ENCODE measurements at regions of chr13 and their contacts with region 1.

Region 1: GRCh38 chr13:100946588-100946987 is 272.0 kb upstream of the TMTC4 start:
- DNase-seq: no peak
- ATAC-seq: no peak
- H3K4me3 Mint-ChIP-seq: no peak overlapping the region
- H3K27ac Mint-ChIP-seq: no peak overlapping the region
- H3K4me1 Mint-ChIP-seq: no peaks in the 10 kb centered on the region
- H3K27me3 Mint-ChIP-seq: no peaks in the 10 kb centered on the region

Region 2: GRCh38 chr13:100514788-100515409 is 431.7 kb before region 1 on chr13:
- CTCF ChIA-PET with region 1: no interaction called
- POLR2A ChIA-PET with region 1: no interaction called
- DNase-seq: peak; percentile 79
- ATAC-seq: peak; percentile 97
- H3K4me3 Mint-ChIP-seq: no peak overlapping the region
- H3K27ac Mint-ChIP-seq: no peak overlapping the region
- H3K4me1 Mint-ChIP-seq: peaks cover 3% of the 10 kb centered on the region
- H3K27me3 Mint-ChIP-seq: no peaks in the 10 kb centered on the region

Region 3: DNA sequence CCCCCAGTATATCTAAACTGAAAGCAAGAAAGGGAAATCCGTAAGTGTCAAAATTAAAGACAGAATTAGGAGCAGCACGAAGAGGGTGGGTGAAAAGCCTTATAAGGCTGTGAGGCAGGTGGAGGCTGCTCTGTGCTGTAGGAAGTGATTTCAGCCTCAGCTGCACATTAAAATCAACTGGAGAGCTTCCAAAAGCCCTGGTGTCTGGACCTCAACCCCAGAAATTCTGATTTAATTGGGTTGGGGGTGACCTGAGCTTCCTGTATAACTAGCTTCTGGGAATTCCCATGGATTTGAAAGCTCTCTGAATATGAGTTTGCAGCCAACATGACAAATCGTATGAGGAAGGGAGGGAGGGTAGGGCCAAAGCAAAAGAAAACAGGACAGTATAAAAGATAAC is 29.6 kb before region 1 on chr13:
- CTCF ChIA-PET with region 1: no interaction called
- POLR2A ChIA-PET with region 1: no interaction called
- DNase-seq: no peak
- ATAC-seq: no peak
- H3K4me3 Mint-ChIP-seq: no peak overlapping the region
- H3K27ac Mint-ChIP-seq: no peak overlapping the region
- H3K4me1 Mint-ChIP-seq: no peaks in the 10 kb centered on the region
- H3K27me3 Mint-ChIP-seq: peaks cover 5% of the 10 kb centered on the region

Region 4: GRCh38 chr13:100933841-100934240 is 12.7 kb before region 1 on chr13:
- CTCF ChIA-PET with region 1: no interaction called
- POLR2A ChIA-PET with region 1: interaction called, 12 read pairs
- DNase-seq: no peak
- ATAC-seq: no peak
- H3K4me3 Mint-ChIP-seq: no peak overlapping the region
- H3K27ac Mint-ChIP-seq: no peak overlapping the region
- H3K4me1 Mint-ChIP-seq: no peaks in the 10 kb centered on the region
- H3K27me3 Mint-ChIP-seq: peaks cover 6% of the 10 kb centered on the region

Region 5: GRCh38 chr13:100957741-100958140 is 11.2 kb after region 1 on chr13:
- CTCF ChIA-PET with region 1: no interaction called
- POLR2A ChIA-PET with region 1: no interaction called
- DNase-seq: no peak
- ATAC-seq: no peak
- H3K4me3 Mint-ChIP-seq: no peak overlapping the region
- H3K27ac Mint-ChIP-seq: no peak overlapping the region
- H3K4me1 Mint-ChIP-seq: no peaks in the 10 kb centered on the region
- H3K27me3 Mint-ChIP-seq: no peaks in the 10 kb centered on the region

Region 6: DNA sequence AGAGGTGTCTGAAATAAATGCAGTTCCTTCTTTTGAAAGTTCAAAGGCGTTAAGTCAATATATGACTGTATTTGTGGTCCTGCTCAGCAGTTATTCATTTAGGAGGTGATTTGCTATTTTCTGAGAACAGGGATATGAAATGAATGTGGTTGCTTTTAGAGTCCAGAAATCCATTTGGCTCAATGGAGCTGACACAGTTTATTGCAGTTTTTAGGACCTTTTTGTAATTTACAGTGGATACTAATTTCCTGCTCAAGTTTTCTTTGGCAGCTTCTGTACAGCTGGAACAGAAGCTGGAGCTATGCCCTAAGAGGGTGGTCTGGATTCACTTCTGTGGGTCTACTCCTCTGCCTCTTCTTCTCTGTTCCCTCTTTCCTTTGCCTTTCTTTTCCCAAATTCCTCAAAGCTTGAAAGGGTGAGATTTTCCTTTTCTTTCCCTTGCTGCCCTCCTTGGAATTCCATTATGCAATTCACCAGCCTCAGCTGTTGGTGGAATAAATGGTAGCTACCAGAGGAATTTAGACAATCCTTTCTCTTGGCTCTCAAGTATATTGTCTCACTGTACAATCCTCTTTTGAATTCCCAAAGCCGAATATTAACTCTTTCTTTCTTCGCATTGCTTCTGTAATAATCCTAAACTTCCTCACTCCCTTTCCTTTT is 545.8 kb after region 1 on chr13:
- CTCF ChIA-PET with region 1: no interaction called
- POLR2A ChIA-PET with region 1: no interaction called
- DNase-seq: no peak
- ATAC-seq: no peak
- H3K4me3 Mint-ChIP-seq: no peak overlapping the region
- H3K27ac Mint-ChIP-seq: no peak overlapping the region
- H3K4me1 Mint-ChIP-seq: no peaks in the 10 kb centered on the region
- H3K27me3 Mint-ChIP-seq: peaks cover 6% of the 10 kb centered on the region

Measured in activated CD8-positive, alpha-beta T cell treated with anti-CD3 and anti-CD28 coated beads, Interleukin-2, amount 10 ng/mL, durations not matched to agents 7 days and 5 days (primary cell).